H1 (cell line): ENCODE measurements at regions of chr1 and their contacts with region 1.

Region 1: GRCh38 chr1:110524311-110525251 is 5.6 kb upstream of the KCNA10 start:
- DNase-seq: peak; percentile 53 to 81
- H3K4me3 ChIP-seq: no peak overlapping the region
- H3K27ac ChIP-seq: no peak overlapping the region
- H3K4me1 ChIP-seq: peaks cover 0 to 3% (median 0%) of the 10 kb centered on the region in 4 experiments; a peak in 1 of 7 replicates
- H3K27me3 ChIP-seq: peaks cover 0 to 6% (median 0%) of the 10 kb centered on the region in 4 experiments; a peak in 4 of 7 replicates
- CTCF ChIP-seq: peak; percentile 89 to 97 (median 93)
- EP300 ChIP-seq: no peak
- POLR2A ChIP-seq: no peak
- RAD21 ChIP-seq: peak; percentile 95 to 98

Region 2: DNA sequence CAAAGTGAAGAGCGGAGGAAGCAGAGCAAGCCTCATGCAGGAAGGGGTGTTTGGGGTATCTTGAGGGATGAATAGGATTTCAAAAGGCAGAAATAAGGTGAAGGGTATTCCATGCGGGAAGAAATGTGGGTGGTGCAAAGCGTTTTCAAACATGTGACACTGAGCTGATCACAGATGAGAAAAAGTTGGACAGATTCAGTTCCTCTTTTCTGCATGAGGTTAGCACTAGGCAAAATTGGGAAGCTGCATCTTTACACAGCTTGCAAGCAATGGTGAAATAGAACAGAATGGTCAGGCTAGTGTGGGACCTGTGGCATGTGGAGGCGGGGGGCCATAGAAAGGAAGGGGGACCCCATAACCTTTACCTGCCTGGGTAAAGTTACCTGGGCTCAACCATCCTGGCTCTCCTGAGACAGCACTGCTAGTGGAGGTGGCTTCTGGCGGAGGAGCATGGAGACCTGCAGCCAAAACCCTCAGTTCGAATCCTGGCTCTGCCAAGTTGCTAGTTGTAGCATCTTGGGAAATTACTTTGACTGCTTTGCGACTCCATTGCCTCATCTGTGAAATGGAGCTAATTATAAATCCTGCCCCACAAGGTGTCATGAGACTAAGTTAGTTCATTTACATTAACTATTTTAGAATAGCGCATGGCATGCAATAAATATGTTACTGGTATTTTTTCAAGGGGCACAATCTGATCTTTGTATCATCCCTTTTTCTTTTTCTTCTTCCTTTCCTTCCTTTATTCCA is 22.0 kb before region 1 on chr1:
- CTCF ChIA-PET with region 1: interaction called, 85 read pairs
- POLR2A ChIA-PET with region 1: no interaction called
- DNase-seq: no peak
- H3K4me3 ChIP-seq: no peak overlapping the region
- H3K27ac ChIP-seq: no peak overlapping the region
- H3K4me1 ChIP-seq: peaks cover 0 to 1% (median 0%) of the 10 kb centered on the region in 4 experiments; a peak in 2 of 7 replicates
- H3K27me3 ChIP-seq: no peaks in the 10 kb centered on the region; a peak in 2 of 7 replicates
- CTCF ChIP-seq: no peak
- EP300 ChIP-seq: no peak
- POLR2A ChIP-seq: no peak
- RAD21 ChIP-seq: no peak

Region 3: DNA sequence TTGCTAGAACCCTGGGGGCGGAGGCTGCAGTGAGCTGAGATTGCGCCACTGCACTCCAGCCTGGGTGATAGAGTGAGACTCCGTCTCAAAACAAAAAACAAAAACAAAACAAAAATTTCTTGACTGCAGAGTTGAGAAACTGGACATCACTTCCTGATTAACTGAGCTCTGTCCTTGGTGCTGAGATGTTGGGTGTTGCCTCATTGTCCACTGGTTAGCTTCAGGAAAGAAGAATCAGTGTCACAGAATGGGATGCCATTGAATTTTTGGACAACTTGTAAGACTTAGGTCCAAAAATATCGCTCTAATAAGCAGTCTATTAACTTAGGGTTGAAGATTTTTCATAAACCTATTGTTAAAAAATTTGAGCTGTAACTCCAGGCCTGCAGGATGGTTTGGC is 18.1 kb after region 1 on chr1:
- CTCF ChIA-PET with region 1: interaction called, 302 read pairs
- POLR2A ChIA-PET with region 1: no interaction called
- DNase-seq: no peak
- H3K4me3 ChIP-seq: no peak overlapping the region
- H3K27ac ChIP-seq: no peak overlapping the region
- H3K4me1 ChIP-seq: no peaks in the 10 kb centered on the region
- H3K27me3 ChIP-seq: peaks cover 0 to 2% (median under 1%) of the 10 kb centered on the region in 4 experiments; a peak in 1 of 7 replicates
- CTCF ChIP-seq: no peak
- EP300 ChIP-seq: no peak
- POLR2A ChIP-seq: no peak
- RAD21 ChIP-seq: no peak

Region 4: DNA sequence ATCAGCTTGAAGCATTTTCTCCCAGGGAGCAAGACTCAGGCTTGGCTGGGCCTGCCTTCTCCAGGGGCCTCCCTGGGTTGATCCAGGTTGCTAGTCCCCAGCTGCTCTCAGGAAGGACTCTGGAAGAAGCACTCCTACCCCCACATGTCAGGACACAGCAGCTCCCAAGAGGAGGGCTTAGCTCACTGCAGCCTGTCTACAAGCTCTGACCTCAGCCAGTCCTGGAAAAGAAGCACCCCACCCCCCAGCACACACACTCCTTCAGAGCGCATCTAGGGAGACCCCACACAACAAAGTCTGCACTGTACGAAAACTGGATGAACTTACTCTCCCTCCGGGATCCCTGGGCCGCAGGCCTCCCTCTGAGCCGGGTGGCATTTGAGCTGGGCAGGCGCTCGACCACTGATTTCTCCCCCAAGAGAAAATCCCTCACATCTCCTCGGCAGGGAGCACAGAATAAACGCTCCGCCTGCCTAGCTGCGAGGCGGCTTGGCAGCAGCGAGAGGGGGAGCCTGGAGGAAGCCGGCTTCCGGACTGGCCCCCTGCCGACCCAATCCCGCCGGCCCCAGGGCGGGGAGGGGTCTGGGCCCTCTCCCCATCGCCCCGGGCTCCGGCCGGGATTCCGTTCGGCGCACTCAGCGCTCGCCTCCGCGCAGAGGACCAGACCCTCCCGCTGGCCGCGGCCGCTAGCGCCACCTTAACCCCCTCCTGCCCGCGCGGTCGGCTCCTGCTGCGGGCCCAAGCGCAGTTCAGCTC is 81.5 kb after region 1 on chr1 and contains the start of gene KCNA2:
- CTCF ChIA-PET with region 1: interaction called, 62 read pairs
- POLR2A ChIA-PET with region 1: no interaction called
- DNase-seq: peak; percentile 50 to 77
- H3K4me3 ChIP-seq: peak within 1 kb of the TSS; percentile 54 to 69 (median 64)
- H3K27ac ChIP-seq: no peak within 1 kb of the TSS
- H3K4me1 ChIP-seq: peaks cover 5 to 15% (median 10%) of the 10 kb centered on the region in 4 experiments
- H3K27me3 ChIP-seq: peaks cover 36 to 78% (median 69%) of the 10 kb centered on the region in 4 experiments
- CTCF ChIP-seq: no peak
- EP300 ChIP-seq: no peak
- POLR2A ChIP-seq: no peak
- RAD21 ChIP-seq: no peak
- total RNA-seq, gene KCNA2: 0.75 and 0.78 TPM in 2 replicates

Region 5: GRCh38 chr1:110746579-110747160 is 222.1 kb after region 1 on chr1:
- CTCF ChIA-PET with region 1: interaction called, 12 read pairs
- POLR2A ChIA-PET with region 1: no interaction called
- DNase-seq: peak; percentile 19 to 75
- H3K4me3 ChIP-seq: no peak overlapping the region
- H3K27ac ChIP-seq: no peak overlapping the region
- H3K4me1 ChIP-seq: peaks cover 0 to 17% (median 8%) of the 10 kb centered on the region in 4 experiments; a peak in 5 of 7 replicates
- H3K27me3 ChIP-seq: peaks cover 0 to 1% (median 0%) of the 10 kb centered on the region in 4 experiments; a peak in 2 of 7 replicates
- CTCF ChIP-seq: no peak
- EP300 ChIP-seq: no peak
- POLR2A ChIP-seq: no peak
- RAD21 ChIP-seq: no peak

Region 6: GRCh38 chr1:110780600-110781484 is 256.3 kb after region 1 on chr1:
- CTCF ChIA-PET with region 1: interaction called, 83 read pairs
- POLR2A ChIA-PET with region 1: no interaction called
- DNase-seq: peak; percentile 43 to 83
- H3K4me3 ChIP-seq: peak overlapping the region; percentile 11 to 61 (median 32); a peak in 7 of 8 replicates
- H3K27ac ChIP-seq: no peak overlapping the region
- H3K4me1 ChIP-seq: peaks cover 0 to 2% (median 0%) of the 10 kb centered on the region in 4 experiments; a peak in 1 of 7 replicates
- H3K27me3 ChIP-seq: peaks cover 0 to 5% (median 1%) of the 10 kb centered on the region in 4 experiments; a peak in 4 of 7 replicates
- CTCF ChIP-seq: peak; percentile 81 to 91 (median 88)
- EP300 ChIP-seq: no peak
- POLR2A ChIP-seq: no peak
- RAD21 ChIP-seq: peak; percentile 90 to 92

Region 7: GRCh38 chr1:111334169-111334568 is 809.6 kb after region 1 on chr1:
- CTCF ChIA-PET with region 1: no interaction called
- POLR2A ChIA-PET with region 1: no interaction called
- DNase-seq: no peak
- H3K4me3 ChIP-seq: no peak overlapping the region
- H3K27ac ChIP-seq: no peak overlapping the region
- H3K4me1 ChIP-seq: no peaks in the 10 kb centered on the region
- H3K27me3 ChIP-seq: no peaks in the 10 kb centered on the region
- CTCF ChIP-seq: peak; percentile 37 to 84 (median 72)
- EP300 ChIP-seq: no peak
- POLR2A ChIP-seq: no peak
- RAD21 ChIP-seq: peak; percentile 96